Caco-2 (cell line): ENCODE measurements at regions of chr3 and their contacts with region 1.

Region 1: GRCh38 chr3:167484551-167484950 is 10.7 kb upstream of the SERPINI2 start:
- DNase-seq: no peak
- H3K4me3 ChIP-seq: no peak overlapping the region
- H3K4me3 Mint-ChIP-seq: no peak overlapping the region
- H3K27ac Mint-ChIP-seq: no peak overlapping the region
- H3K4me1 ChIP-seq: peaks cover 7% of the 10 kb centered on the region; the same call in 1 of the 2 replicates
- H3K4me1 Mint-ChIP-seq: peaks cover 6% of the 10 kb centered on the region
- H3K27me3 ChIP-seq: no peaks in the 10 kb centered on the region
- H3K27me3 Mint-ChIP-seq: no peaks in the 10 kb centered on the region
- CTCF ChIP-seq: no peak

Region 2: GRCh38 chr3:167304077-167304476 is 180.5 kb before region 1 on chr3:
- CTCF ChIA-PET with region 1: no interaction called
- POLR2A ChIA-PET with region 1: no interaction called
- intact Hi-C with region 1: no loop called
- DNase-seq: no peak
- H3K4me3 ChIP-seq: no peak overlapping the region
- H3K4me3 Mint-ChIP-seq: no peak overlapping the region
- H3K27ac Mint-ChIP-seq: no peak overlapping the region
- H3K4me1 ChIP-seq: no peaks in the 10 kb centered on the region
- H3K4me1 Mint-ChIP-seq: no peaks in the 10 kb centered on the region
- H3K27me3 ChIP-seq: no peaks in the 10 kb centered on the region
- H3K27me3 Mint-ChIP-seq: no peaks in the 10 kb centered on the region
- CTCF ChIP-seq: no peak

Region 3: GRCh38 chr3:167450195-167450594 is 34.4 kb before region 1 on chr3:
- CTCF ChIA-PET with region 1: no interaction called
- POLR2A ChIA-PET with region 1: no interaction called
- intact Hi-C with region 1: no loop called
- DNase-seq: no peak
- H3K4me3 ChIP-seq: no peak overlapping the region
- H3K4me3 Mint-ChIP-seq: no peak overlapping the region
- H3K27ac Mint-ChIP-seq: no peak overlapping the region
- H3K4me1 ChIP-seq: no peaks in the 10 kb centered on the region
- H3K4me1 Mint-ChIP-seq: no peaks in the 10 kb centered on the region
- H3K27me3 ChIP-seq: no peaks in the 10 kb centered on the region
- H3K27me3 Mint-ChIP-seq: peaks cover 3% of the 10 kb centered on the region
- CTCF ChIP-seq: no peak

Region 4: GRCh38 chr3:167467848-167468611 is 16.5 kb before region 1 on chr3:
- CTCF ChIA-PET with region 1: interaction called, 7 read pairs
- POLR2A ChIA-PET with region 1: no interaction called
- intact Hi-C with region 1: loop called (anchors 2 kb)
- DNase-seq: peak; percentile 24 to 41
- H3K4me3 ChIP-seq: no peak overlapping the region
- H3K4me3 Mint-ChIP-seq: no peak overlapping the region
- H3K27ac Mint-ChIP-seq: no peak overlapping the region
- H3K4me1 ChIP-seq: peaks cover 11% of the 10 kb centered on the region; the same call in 1 of the 2 replicates
- H3K4me1 Mint-ChIP-seq: peaks cover 12% of the 10 kb centered on the region
- H3K27me3 ChIP-seq: no peaks in the 10 kb centered on the region
- H3K27me3 Mint-ChIP-seq: no peaks in the 10 kb centered on the region
- CTCF ChIP-seq: no peak